Mammary epithelial cell (primary cell): ENCODE measurements at regions of chr11 and their contacts with region 1.

Region 1: DNA sequence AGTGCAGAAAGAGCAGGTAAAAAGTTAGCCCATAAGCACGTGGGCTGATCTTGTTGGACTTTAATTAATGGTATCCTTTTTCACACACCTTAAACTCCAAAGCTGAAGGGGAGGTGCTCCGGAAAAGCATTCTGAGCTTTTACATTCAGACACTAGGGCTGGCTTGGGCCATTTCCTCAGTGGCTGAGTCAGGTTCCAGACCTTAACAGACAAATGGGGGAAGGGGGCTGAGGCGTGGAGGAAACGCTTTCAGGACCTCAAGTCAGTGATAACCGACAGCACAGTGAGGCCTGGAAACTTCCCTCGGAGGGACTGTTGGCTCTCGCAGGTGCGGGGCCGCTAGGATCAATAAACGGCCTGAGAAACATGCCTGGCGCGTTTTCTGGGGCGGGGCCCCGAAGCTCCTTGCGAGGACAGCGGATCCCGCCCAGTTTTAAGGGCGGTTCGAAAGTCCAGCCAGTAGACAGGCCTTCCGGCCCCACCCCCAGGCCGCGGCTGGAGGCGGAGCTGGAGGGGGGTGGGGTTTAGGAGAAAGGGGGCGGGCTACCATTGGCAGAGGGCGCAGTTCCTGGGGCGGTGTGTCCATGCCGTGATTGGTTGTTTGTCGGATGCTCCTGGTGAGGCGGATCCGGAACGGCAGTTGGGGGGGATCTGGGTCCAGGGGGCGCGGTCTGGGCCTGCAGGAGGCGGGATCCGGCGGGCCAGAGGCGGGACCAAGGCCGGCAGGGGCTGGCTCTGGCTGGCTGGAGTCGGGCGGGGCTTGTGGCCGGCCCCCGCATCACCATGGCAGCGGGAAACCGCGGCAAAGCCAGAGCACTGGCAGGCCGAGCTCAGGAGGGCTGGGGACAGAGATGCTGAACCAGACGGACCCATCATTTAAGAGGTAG is 8.0 kb downstream of the C11orf52 start:
- DNase-seq: peak; percentile 94
- H3K4me3 ChIP-seq: peak overlapping the region; percentile 26 to 48 (median 37)
- H3K27ac ChIP-seq: peak overlapping the region; percentile 67
- H3K4me1 ChIP-seq: peaks cover 10% of the 10 kb centered on the region
- H3K27me3 ChIP-seq: no peaks in the 10 kb centered on the region
- CTCF ChIP-seq: peak in 1 of 2 donors; percentile 3

Region 2: GRCh38 chr11:111494040-111494439 is 432.7 kb before region 1 on chr11:
- CTCF ChIA-PET with region 1: interaction called, 14 read pairs
- dilution Hi-C with region 1: no loop called
- in situ Hi-C with region 1: no loop called
- intact Hi-C with region 1: no loop called
- DNase-seq: no peak
- H3K4me3 ChIP-seq: no peak overlapping the region
- H3K27ac ChIP-seq: no peak overlapping the region
- H3K4me1 ChIP-seq: no peaks in the 10 kb centered on the region
- H3K27me3 ChIP-seq: no peaks in the 10 kb centered on the region
- CTCF ChIP-seq: no peak

Region 3: DNA sequence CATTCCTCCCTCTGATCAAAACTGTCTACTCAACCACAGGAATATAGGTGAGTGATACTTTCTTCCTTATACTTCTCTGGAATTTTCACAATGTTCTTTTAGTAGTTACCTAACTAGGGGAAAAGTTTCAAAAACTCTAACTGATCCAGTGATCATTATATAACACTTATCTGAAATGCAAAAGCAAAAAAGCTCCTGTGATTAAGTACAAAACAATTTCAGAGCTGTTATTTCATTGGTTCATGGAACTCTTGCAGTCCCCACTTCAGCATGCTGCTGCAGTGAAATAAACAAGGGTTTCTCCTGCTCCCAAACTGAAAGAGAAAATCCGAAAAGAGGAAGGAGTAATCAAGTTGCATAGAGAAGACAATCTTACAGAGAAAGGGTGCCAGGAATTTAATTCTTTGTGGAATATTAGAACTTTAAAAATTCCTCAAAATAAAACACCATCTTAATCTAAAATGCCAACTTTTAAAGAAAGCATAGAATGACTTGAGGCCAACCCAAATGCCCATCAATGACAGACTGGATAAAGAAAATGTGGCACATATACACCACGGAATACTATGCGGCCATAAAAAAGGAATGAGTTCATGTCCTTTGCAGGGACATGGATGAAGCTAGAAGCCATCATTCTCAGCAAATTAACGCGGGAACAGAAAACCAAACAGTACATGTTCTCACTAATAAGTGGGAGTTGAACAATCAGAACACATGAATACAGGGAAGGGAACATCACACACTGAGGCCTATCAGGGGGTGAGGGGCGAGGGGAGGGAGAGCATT is 180.8 kb before region 1 on chr11:
- CTCF ChIA-PET with region 1: no interaction called
- dilution Hi-C with region 1: no loop called
- in situ Hi-C with region 1: no loop called
- intact Hi-C with region 1: no loop called
- DNase-seq: no peak
- H3K4me3 ChIP-seq: no peak overlapping the region
- H3K27ac ChIP-seq: peak overlapping the region; percentile 43
- H3K4me1 ChIP-seq: peaks cover 11% of the 10 kb centered on the region
- H3K27me3 ChIP-seq: no peaks in the 10 kb centered on the region
- CTCF ChIP-seq: no peak

Region 4: GRCh38 chr11:112005422-112006094 is 78.8 kb after region 1 on chr11:
- CTCF ChIA-PET with region 1: no interaction called
- dilution Hi-C with region 1: loop called (anchors 5 kb)
- in situ Hi-C with region 1: no loop called
- intact Hi-C with region 1: no loop called
- DNase-seq: no peak
- H3K4me3 ChIP-seq: no peak overlapping the region
- H3K27ac ChIP-seq: no peak overlapping the region
- H3K4me1 ChIP-seq: no peaks in the 10 kb centered on the region
- H3K27me3 ChIP-seq: no peaks in the 10 kb centered on the region
- CTCF ChIP-seq: no peak